K562 (cell line): ENCODE measurements at regions of chr4 and their contacts with region 1.

Region 1: DNA sequence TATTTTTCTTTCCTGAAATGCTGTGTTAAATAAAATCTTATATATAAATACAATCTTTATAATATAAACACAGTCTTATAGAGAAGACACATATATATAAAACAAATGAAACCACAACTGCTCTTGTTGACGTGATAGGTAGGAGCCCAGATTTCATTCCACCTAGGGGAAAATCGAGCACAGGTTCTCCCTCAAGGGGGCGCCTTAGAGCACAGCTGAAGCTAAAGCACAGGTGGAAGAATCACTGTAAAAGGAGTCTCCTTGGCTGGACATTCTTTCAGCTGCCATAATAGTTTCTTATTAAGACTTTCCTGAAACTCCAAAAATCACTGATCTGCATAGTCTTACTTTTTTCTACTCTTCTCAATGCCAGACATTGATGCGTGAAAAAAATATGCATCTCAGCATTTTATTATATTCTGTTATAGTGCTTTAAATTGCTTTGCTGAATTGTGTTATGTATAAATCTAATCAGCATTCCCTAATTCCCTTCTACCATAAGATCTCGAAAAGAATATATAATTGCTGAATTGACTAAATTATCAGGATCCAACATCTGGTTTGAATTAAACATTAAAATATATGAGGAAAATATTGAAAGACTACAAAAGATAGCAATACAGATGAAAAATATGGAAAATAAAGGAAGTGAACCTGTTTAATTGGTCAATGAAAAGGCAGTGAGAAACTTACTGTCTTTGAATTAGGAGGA is 25.5 kb upstream of the RXFP1 start:
- DNase-seq: peak; percentile 26 to 62 (median 36)
- ATAC-seq: peak; percentile 72; the same call in 2 of the 3 replicates
- H3K4me3 ChIP-seq: no peak overlapping the region
- H3K27ac ChIP-seq: no peak overlapping the region
- H3K4me1 ChIP-seq: no peaks in the 10 kb centered on the region
- H3K27me3 ChIP-seq: no peaks in the 10 kb centered on the region; a peak in 1 of 5 replicates
- CTCF ChIP-seq: peak; percentile 48 to 70 (median 66); a peak in 5 of 6 replicates
- EP300 ChIP-seq: no peak
- POLR2A ChIP-seq: no peak
- RAD21 ChIP-seq: peak; percentile 37 to 61; a peak in 3 of 4 replicates

Region 2: DNA sequence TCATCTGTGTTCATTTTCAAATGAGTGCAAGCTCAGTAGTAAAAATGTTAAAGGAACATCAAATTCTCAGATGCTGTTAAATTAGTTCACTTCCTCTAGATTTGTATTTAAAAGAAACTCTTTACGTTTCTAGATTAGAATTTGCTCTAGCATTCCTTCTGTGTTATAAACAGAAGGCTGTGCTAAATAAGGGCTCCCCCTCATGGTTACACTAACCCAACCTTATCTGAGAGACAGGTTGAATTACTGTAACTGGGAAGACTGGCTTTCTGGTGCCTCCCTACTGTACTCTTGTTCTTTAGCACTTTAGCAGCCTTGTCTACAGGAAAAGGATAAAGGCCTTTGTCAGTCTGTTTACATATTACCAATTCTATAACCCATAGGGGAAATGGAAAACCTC is 82.3 kb after region 1 on chr4:
- CTCF ChIA-PET with region 1: no interaction called
- POLR2A ChIA-PET with region 1: no interaction called
- in situ Hi-C with region 1: no loop called
- intact Hi-C with region 1: loop called (anchors 2 kb)
- DNase-seq: peak in 3 of 4 experiments; percentile 12 to 35 (median 27)
- ATAC-seq: peak; percentile 95
- H3K4me3 ChIP-seq: no peak overlapping the region
- H3K27ac ChIP-seq: no peak overlapping the region
- H3K4me1 ChIP-seq: no peaks in the 10 kb centered on the region
- H3K27me3 ChIP-seq: no peaks in the 10 kb centered on the region; a peak in 1 of 5 replicates
- CTCF ChIP-seq: peak; percentile 34 to 63 (median 38); a peak in 3 of 6 replicates
- EP300 ChIP-seq: no peak
- POLR2A ChIP-seq: no peak
- RAD21 ChIP-seq: peak; percentile 54 to 63

Region 3: DNA sequence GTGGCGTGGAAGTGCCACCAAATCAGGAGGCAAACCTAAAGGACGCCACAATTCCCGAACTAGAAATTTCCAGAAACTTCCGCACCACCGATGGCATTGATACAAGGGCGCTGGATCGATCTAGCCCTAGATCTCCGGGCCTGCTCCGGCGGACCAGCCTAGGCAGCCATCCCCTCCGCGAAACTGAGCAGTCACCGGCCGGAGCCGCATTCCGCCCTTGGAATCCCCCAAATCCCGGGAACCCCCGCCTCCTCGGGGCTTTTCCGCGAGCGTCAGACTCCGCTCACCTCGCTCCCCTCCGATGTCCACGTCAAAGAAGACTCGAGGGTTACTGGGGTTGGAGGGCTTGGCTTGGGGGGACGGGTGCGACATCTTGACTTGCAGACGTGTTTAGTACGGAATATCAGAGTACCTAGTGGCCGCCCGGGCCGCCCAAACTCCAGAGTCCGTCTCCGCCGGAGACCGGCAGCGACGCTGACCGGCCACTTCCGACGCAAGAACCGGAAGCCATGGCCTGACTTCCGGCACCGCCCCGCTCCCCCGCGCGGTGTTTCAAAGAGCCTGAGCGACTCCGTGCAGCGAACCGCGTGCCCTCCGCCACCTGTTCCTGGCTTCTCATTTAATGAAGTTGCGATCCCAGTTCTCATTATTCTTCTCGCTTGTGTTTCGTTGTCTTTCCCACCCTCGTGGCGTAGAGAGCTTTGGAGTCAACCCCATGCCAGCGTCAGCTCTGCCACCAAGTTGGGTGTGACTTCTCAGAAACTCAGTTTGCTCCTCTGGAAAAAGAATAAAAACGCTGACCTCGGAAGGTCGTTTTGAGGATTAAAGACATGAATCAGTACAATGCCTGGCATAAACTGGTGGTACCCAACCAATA is 227.0 kb after region 1 on chr4 and contains the start of gene PPID:
- CTCF ChIA-PET with region 1: no interaction called
- POLR2A ChIA-PET with region 1: no interaction called
- in situ Hi-C with region 1: no loop called
- intact Hi-C with region 1: no loop called
- DNase-seq: peak; percentile 86 to 95 (median 88)
- ATAC-seq: peak; percentile 99
- H3K4me3 ChIP-seq: peak within 1 kb of the TSS; percentile 86
- H3K27ac ChIP-seq: peak within 1 kb of the TSS; percentile 91
- H3K4me1 ChIP-seq: peaks cover 0 to 5% of the 10 kb centered on the region in 2 experiments; a peak in 2 of 5 replicates
- H3K27me3 ChIP-seq: no peaks in the 10 kb centered on the region
- CTCF ChIP-seq: 0 out of 6 replicates have a peak, but pooled peaks of 2 of the 3 experiments have one; percentile 5 to 7
- EP300 ChIP-seq: no peak
- POLR2A ChIP-seq: peak; percentile 93
- RAD21 ChIP-seq: no peak
- polyA plus RNA-seq, gene PPID: 57.5 to 135 TPM